GM13976 (cell line): ENCODE measurements at regions of chr11 and their contacts with region 1.

Region 1: DNA sequence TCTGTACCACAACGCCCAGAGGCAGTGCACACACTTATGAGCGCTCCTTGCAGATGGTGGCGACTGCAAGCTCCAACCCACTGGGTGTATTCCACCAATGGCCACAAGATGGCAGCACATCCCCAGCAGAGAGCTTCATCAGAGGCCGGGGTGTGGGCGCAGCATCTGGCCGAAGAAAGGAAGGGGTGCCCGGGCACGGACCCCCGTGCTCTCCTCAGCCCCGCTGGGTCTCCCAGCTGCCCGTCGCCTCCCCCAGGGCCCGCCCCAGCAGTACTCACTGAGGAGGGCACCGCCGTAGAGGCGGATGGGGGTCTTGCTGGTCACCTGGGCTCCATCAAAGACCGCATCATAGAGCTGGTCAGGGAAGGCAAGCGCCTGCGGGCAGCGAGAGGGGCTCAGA is 14.2 kb downstream of the TP53I11 start:
- DNase-seq: peak; percentile 87
- CTCF ChIP-seq: peak; percentile 95

Region 2: DNA sequence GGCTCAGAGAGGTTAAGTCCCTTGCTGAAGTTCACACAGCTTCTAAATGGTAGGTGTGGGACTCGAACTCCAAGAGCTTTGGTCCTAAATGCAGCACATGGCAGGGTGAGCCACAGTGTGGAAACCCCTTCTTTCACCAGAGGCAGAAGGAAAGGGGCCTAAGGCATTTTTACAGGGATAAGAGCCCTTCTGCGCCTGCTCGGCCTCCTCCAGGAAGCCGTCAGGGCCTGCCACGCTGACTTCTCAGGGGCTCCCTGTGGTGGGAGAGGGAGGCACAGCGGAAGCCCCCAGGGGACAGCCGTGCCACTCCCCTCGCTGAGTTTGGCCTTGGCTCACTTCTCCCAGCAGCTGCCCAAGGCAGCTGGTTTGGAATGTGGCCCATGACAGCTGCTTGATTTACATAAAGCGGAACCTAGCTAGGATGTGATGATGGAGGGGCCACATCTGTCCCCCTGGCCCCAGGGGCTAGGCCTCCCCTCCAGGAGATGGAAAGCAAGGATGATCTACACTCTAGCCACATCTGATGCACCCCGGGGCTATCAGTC is 335.6 kb before region 1 on chr11:
- in situ Hi-C with region 1: no loop called
- DNase-seq: peak; percentile 58
- CTCF ChIP-seq: no peak

Region 3: DNA sequence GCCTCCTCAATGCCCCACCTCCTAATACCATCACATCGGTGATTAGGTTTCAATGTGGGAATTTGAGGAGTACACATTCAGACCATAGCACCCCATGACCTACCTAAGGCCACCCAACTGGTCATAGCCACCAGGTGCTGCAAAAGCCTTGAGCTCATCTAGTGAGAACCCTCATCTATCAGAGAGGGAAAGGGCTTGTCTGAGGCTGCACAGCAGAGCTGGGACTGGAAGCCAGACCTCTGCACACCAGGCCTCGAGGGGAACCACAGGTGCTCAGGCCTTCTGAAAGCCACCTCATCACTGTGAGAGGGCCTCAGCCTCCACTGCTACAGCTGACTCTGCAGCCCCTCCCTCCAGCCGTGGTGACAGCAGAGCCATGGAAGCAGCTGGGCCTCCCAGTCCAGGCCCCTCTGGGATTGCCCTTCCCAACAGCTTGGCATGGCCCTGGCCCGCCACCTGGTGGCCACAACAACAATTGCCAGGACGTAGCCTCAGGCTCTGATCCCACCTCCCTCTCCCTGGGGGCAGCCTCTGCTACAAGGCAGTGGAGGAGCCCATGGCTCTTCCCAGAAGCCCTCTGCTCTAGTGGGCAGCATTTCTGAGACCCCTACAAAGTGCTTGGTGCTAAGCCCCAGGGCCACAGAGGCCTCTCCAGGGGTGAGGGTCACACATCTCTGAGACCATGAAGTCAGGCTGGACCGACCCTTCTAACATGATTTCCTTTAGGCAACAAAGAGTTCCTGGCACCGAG is 168.9 kb after region 1 on chr11:
- in situ Hi-C with region 1: loop called (anchors 5 kb)
- DNase-seq: peak; percentile 81
- CTCF ChIP-seq: peak; percentile 79

Region 4: GRCh38 chr11:45285930-45286632 is 349.6 kb after region 1 on chr11 and contains the start of gene SYT13:
- in situ Hi-C with region 1: loop called (anchors 25 kb)
- DNase-seq: no peak
- CTCF ChIP-seq: no peak